Dendritic cell treated with granulocyte-macrophage colony-stimulating factor and Interleukin-4, amounts not matched to agents 40 ng/mL and 50 ng/mL, for 4 days (primary cell): ENCODE measurements at regions of chr17 and their contacts with region 1.

Region 1: DNA sequence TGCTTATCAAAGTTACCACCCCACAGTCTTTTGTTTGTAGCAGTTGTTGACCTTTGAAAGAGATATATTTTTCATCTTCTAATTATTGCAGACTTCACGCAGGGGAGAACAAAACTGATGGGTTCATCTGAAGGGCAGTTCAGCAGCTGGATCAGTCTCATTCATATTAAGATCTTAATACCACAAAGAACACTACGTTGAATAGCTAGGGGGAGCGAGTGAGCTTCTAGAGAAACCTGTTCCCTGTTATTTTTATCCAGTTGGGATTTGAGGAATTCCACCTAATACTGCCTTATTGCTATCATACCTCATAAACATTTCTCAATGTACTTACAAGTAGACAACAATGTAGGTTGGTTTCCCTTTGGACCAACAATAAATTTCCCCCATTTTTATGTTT is 306.1 kb upstream of the KIF2B start:
- H3K4me3 Mint-ChIP-seq: no peak overlapping the region
- H3K27ac Mint-ChIP-seq: no peak overlapping the region
- H3K4me1 Mint-ChIP-seq: no peaks in the 10 kb centered on the region
- H3K27me3 Mint-ChIP-seq: no peaks in the 10 kb centered on the region

Region 2: DNA sequence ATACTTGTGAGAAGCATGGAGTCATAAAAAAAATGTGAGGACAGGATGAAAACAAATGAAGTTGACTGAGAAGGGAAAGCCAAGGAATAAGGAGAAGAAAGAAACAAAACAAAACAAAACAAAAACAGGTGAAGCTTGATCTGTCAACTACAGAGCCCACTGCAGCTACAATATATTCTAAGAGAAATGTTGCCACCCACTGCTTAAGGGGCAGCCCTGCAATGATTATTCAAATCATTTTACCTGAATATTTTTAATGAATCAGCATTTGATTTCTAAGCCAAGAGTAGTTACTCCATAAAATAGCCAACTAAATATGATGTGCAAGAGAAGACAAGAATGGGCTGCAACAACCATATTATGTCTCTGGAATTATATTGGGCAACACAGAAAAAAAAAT is 54.1 kb after region 1 on chr17:
- intact Hi-C with region 1: loop called (anchors 10 kb)
- H3K4me3 Mint-ChIP-seq: no peak overlapping the region
- H3K27ac Mint-ChIP-seq: no peak overlapping the region
- H3K4me1 Mint-ChIP-seq: no peaks in the 10 kb centered on the region
- H3K27me3 Mint-ChIP-seq: no peaks in the 10 kb centered on the region